Activated T-helper 1 cell treated with anti-CD3 and anti-CD28 coated beads, Interleukin-12 subunit alpha, Interleukin-12 subunit beta, Interleukin-2, Interleukin-4 antibody, amounts not matched to agents 30 ng/mL and 10 ng/mL and 1 ng/mL, durations not matched to agents 14 hours and 24 hours and 36 hours (primary cell): ENCODE measurements at regions of chr17 and their contacts with region 1.

Region 1: DNA sequence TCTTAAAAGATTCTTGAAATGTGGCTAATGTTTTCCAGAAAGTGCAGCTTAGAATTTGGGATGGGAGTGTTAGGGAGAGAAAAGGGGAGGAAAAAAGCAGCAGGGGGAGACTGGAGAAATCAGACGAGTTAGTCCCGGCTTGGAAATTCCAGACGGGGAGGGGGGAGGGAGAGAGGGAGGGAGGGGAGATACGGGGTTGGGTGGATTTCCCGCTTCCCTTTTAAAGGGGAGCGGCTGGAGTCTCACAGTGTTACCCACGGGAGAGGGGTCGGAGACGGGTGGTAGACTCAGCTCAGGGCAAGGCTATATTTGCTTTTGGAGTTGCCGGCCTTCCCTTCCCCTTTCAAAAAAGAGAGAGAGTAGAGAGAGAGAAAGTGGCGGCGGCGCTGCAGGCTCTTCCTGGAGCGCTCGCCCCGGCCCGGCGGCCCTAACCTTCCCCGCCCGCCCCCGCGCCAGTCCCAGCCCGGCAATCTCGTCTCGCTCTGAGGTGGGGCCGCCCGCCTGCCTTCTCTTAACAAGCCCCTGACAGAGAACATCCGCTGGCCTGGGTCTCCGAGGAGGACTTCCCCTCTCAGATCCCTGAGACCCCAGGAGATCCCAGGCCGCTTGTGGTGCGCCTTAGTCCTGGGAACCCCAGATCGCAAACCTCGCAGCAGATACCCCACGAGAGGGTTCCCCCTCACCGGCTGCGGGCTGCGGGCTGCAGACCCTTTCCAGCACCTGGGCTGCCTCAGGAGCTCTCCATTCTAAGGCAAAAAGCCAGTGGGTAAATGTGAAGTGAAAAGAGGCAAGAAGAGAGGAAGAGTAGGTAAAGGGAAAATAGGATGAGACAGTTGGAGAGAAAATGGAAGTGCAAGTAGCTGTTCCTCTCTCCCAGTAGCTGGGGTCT is 6.7 kb downstream of the IGF2BP1 start:
- DNase-seq: no peak
- H3K4me3 Mint-ChIP-seq: no peak overlapping the region
- H3K27ac Mint-ChIP-seq: no peak overlapping the region
- H3K4me1 Mint-ChIP-seq: no peaks in the 10 kb centered on the region
- H3K27me3 Mint-ChIP-seq: peaks cover 89% of the 10 kb centered on the region

Region 2: DNA sequence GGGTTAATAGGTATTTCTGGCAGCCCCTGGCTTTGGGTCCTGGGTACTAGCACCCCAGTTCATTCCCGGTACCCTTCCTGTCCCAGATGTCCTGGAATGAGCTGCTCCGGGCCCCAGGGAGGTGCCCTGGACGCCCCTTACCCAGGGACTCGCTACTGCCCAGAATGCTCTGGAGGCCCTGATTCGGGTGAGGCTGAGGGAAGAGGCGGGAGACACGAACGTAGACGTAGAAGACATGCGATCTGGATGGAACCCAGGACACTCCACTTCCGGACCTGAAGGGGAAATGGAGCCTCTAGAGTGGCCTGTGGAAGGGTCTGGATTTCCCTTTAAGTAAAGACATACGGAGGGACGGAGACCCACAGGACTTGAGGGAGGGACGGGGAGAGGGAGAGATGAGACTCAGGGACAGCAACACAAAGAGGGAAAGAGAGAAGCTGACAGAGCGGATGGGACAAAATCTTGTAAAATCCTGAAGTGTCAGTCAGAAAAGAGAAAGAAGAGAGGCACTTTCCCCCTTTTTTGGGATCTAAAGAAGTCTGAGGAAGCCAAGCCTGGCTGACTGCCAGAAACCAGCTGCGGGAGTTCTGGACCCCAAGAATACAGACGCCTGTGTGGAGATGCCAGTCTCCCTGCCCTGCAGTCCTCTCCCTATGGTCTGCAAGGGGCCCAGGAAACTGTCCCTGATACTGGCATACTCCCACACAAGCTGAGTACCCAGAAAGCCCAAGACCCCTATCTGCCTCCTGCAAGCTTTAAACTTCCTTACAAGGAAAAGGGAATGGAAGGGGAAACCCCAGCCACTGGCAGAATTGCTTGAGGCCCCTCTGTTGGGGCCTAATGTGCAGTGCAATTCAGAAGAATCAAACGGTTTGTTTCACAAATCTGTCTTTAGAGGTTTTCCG is 274.3 kb before region 1 on chr17:
- intact Hi-C with region 1: loop called (anchors 5 kb)
- DNase-seq: no peak
- H3K4me3 Mint-ChIP-seq: no peak overlapping the region
- H3K27ac Mint-ChIP-seq: no peak overlapping the region
- H3K4me1 Mint-ChIP-seq: peaks cover 20% of the 10 kb centered on the region
- H3K27me3 Mint-ChIP-seq: peaks cover 88% of the 10 kb centered on the region

Region 3: GRCh38 chr17:48985436-48986245 is 18.2 kb before region 1 on chr17:
- intact Hi-C with region 1: loop called (anchors 2 kb)
- DNase-seq: no peak
- H3K4me3 Mint-ChIP-seq: no peak overlapping the region
- H3K27ac Mint-ChIP-seq: no peak overlapping the region
- H3K4me1 Mint-ChIP-seq: no peaks in the 10 kb centered on the region
- H3K27me3 Mint-ChIP-seq: peaks cover 42% of the 10 kb centered on the region